Common myeloid progenitor, CD34-positive (primary cell): ENCODE measurements at regions of chr1 and their contacts with region 1.

Region 1: DNA sequence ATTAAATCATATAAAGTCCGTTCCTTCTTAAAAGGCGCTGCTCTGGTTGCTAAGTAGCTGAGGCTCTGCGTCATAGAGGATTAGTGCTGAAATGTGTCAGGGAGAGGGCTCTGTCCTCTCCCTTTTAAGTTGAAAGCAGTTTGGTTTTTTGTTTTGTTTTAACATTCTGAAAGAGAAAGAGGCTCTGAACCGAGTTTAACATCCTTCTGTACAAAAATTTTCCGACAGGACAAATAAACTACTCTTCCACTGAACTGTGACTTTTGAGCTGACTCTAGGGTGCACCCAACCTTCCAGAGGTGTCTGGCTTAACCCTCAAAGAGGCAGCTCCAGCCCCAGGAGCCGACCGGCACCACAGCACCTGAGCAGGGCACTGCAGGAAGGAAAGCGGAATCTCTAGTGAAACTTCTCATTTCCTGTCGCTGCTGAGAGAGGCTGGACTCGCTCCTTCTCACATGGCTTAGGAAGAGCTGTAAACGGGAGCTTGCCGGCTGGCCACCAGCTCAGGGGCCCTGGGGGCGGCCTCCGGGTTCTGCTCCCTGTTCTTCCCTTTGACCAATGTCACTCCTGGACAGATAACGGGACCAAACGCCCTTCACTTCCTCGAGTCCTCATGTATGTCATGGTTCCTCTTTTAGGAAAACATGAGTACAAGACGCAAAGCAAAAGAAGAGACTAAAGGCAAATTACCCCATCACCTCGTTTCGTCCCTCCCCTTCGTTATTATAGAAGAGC is 1.2 kb downstream of the VAV3 start:
- DNase-seq: peak in 2 of 3 donors; percentile 63 to 76
- H3K4me3 ChIP-seq: peak overlapping the region; percentile 95 to 99 (median 98)
- H3K27ac ChIP-seq: peak overlapping the region; percentile 59 to 92
- H3K4me1 ChIP-seq: peaks cover 16 to 46% (median 33%) of the 10 kb centered on the region in 4 experiments
- H3K27me3 ChIP-seq: no peaks in the 10 kb centered on the region

Region 2: GRCh38 chr1:107572653-107573211 is 391.0 kb before region 1 on chr1:
- CTCF ChIA-PET with region 1: no interaction called
- POLR2A ChIA-PET with region 1: no interaction called
- DNase-seq: no peak
- H3K4me3 ChIP-seq: no peak overlapping the region
- H3K27ac ChIP-seq: no peak overlapping the region
- H3K4me1 ChIP-seq: no peaks in the 10 kb centered on the region
- H3K27me3 ChIP-seq: no peaks in the 10 kb centered on the region

Region 3: GRCh38 chr1:107648071-107648470 is 315.7 kb before region 1 on chr1:
- CTCF ChIA-PET with region 1: no interaction called
- POLR2A ChIA-PET with region 1: no interaction called
- DNase-seq: peak in 2 of 3 donors; percentile 3 to 16
- H3K4me3 ChIP-seq: no peak overlapping the region
- H3K27ac ChIP-seq: no peak overlapping the region
- H3K4me1 ChIP-seq: no peaks in the 10 kb centered on the region
- H3K27me3 ChIP-seq: no peaks in the 10 kb centered on the region

Region 4: DNA sequence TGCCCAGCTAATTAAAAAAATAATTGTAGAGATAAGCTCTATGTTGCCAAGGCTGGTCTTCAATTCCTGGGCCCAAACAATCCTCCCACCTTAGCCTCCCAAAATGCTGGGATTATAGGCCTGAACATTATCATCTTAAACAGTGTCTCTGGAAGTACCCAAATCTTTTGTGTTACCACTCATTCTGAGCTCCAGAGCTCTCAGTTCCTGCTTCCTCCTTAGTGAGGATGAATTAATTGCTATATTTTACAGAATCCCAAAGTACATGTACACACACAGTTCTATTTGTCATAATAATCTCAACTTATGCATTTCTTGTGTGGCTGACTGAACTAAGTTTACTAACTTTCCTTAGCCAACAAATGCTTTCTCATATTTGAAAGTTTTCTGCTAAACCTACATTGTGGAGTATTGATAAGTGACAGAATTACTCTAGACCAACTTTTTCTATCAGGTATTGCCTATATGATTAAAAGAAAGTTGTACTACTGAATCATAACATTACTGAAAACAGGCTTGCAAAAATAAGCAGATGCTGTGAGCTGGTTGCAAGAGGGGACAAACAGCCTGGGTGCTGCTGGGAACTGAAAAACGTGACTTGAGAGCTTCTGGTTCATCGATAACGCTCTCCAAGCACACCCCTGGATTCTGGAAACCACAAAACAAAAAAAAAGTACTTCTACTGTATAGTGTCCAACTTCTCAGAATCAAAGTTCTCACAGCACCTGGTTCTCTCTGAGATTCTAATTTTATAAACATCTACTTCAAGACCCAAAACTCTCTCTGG is 14.1 kb before region 1 on chr1:
- CTCF ChIA-PET with region 1: interaction called, 12 read pairs
- POLR2A ChIA-PET with region 1: interaction called, 4 read pairs
- DNase-seq: no peak
- H3K4me3 ChIP-seq: peak overlapping the region in 3 of 7 experiments; percentile 2 to 40 (median 29)
- H3K27ac ChIP-seq: peak overlapping the region in 1 of 2 experiments; percentile 12
- H3K4me1 ChIP-seq: peaks cover 33 to 72% (median 56%) of the 10 kb centered on the region in 4 experiments
- H3K27me3 ChIP-seq: no peaks in the 10 kb centered on the region

Region 5: GRCh38 chr1:107991371-107992066 is 27.8 kb after region 1 on chr1:
- CTCF ChIA-PET with region 1: no interaction called
- POLR2A ChIA-PET with region 1: no interaction called
- DNase-seq: no peak
- H3K4me3 ChIP-seq: no peak overlapping the region
- H3K27ac ChIP-seq: no peak overlapping the region
- H3K4me1 ChIP-seq: no peaks in the 10 kb centered on the region
- H3K27me3 ChIP-seq: no peaks in the 10 kb centered on the region

Region 6: DNA sequence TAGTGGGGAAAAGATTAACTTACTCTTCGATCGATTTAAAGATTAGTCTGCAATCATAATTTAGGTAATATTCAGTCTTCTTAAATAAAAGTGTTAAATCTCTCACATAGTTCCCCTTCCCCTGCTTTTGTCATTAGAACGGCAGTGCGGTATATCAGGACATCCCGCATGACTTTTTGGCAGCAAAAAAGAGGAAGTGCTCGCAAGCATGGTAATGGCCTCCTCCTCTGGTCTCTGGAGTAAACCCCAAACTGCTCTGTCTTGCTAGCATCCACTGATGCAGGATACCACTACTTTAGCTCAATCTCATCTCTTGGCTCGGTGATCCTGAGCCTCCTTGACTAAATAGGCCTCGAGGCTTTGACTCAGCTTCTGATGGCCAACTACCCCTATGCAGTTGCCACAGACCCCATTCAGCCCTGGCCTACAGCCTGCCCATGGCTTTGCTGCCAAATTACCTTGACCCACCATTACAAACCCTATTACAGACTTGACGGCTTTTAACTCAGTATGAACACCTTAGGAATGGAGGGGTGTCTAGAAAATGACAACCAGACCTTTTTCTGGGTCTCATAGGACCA is 80.0 kb after region 1 on chr1:
- CTCF ChIA-PET with region 1: interaction called, 11 read pairs
- POLR2A ChIA-PET with region 1: no interaction called
- DNase-seq: peak; percentile 85 to 97 (median 95)
- H3K4me3 ChIP-seq: no peak overlapping the region
- H3K27ac ChIP-seq: no peak overlapping the region
- H3K4me1 ChIP-seq: peaks cover 12 to 73% (median 43%) of the 10 kb centered on the region in 4 experiments
- H3K27me3 ChIP-seq: no peaks in the 10 kb centered on the region

Region 7: DNA sequence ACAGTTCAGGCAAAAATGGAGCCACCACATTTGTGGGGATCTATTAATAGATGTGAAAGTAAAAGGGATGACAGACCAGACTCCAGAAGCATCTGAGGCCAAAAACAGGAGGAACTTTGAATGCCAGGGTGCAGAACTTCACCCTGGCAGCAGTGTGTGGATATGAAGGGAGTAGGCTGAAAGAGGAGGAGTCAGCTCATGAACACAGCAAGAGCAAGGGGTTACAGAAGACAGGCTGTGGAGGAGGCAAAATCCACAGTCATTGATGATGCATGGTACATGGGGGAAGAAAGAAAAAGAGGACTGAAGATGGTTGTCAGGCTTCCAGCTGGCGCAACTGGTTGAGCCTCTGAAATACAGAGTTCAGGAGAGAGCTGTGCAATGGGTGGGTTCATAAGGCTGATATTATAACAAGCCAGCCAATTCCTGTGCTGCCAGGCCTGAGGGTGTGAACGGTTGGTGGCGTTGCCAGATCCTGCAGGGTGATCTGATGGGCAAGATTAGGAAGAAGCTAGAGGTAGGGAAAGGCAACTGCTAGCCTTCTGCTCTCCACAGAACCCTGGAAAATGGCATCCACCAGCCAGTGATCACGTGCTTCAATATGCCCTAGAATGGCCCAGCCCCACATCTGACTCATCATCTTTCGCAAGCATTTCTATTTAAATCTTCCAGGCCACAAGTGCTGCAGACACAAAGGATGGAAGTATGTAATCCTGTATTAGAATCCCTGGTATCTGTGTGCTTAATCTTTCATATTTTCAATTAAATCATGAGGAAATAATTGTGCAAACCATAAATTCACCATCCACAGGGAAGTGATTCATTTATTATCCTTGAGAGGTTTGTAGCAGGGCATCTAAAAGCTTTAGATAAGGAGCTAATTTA is 154.5 kb after region 1 on chr1:
- CTCF ChIA-PET with region 1: interaction called, 47 read pairs
- POLR2A ChIA-PET with region 1: no interaction called
- DNase-seq: peak; percentile 43 to 78 (median 50)
- H3K4me3 ChIP-seq: peak overlapping the region in 2 of 7 experiments; percentile 6
- H3K27ac ChIP-seq: no peak overlapping the region
- H3K4me1 ChIP-seq: peaks cover 7 to 40% (median 28%) of the 10 kb centered on the region in 4 experiments
- H3K27me3 ChIP-seq: no peaks in the 10 kb centered on the region

Region 8: GRCh38 chr1:108125312-108126138 is 161.8 kb after region 1 on chr1:
- CTCF ChIA-PET with region 1: interaction called, 47 read pairs
- POLR2A ChIA-PET with region 1: no interaction called
- DNase-seq: peak; percentile 84 to 89 (median 85)
- H3K4me3 ChIP-seq: no peak overlapping the region
- H3K27ac ChIP-seq: no peak overlapping the region
- H3K4me1 ChIP-seq: peaks cover 0 to 16% (median 8%) of the 10 kb centered on the region in 4 experiments
- H3K27me3 ChIP-seq: no peaks in the 10 kb centered on the region